B cell (primary cell): ENCODE measurements at regions of chr2 and their contacts with region 1.

Region 1: GRCh38 chr2:142989273-142990204 is 112.1 kb downstream of the KYNU start:
- DNase-seq: peak; percentile 50
- ATAC-seq: peak; percentile 39
- H3K4me3 ChIP-seq: no peak overlapping the region
- H3K4me3 Mint-ChIP-seq: no peak overlapping the region
- H3K27ac ChIP-seq: no peak overlapping the region
- H3K27ac Mint-ChIP-seq: no peak overlapping the region
- H3K4me1 ChIP-seq: no peaks in the 10 kb centered on the region
- H3K4me1 Mint-ChIP-seq: peaks cover 5% of the 10 kb centered on the region
- H3K27me3 ChIP-seq: no peaks in the 10 kb centered on the region
- H3K27me3 Mint-ChIP-seq: no peaks in the 10 kb centered on the region
- CTCF ChIP-seq: peak; percentile 74

Region 2: DNA sequence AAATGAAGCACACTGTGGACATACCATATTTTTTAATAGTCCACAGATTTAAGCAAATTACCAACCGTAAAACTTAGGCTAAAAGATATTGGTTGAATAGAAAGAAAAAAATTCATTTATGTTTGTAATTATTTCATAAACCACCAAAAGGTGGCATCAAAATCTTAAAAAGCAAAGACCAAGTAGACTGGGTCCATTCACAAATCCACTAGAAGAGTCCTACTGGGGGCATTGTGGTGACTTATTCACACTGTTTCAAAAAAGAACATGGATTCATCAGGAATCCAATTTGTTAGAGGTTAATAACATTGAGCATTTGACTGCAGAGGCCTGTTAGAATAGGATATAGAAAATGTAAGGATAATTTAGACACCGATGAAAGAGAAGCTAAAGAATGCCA is 307.0 kb before region 1 on chr2:
- CTCF ChIA-PET with region 1: interaction called, 29 read pairs
- POLR2A ChIA-PET with region 1: no interaction called
- intact Hi-C with region 1: loop called (anchors 1 kb)
- DNase-seq: peak; percentile 13
- ATAC-seq: no peak
- H3K4me3 ChIP-seq: no peak overlapping the region
- H3K4me3 Mint-ChIP-seq: no peak overlapping the region
- H3K27ac ChIP-seq: no peak overlapping the region
- H3K27ac Mint-ChIP-seq: no peak overlapping the region
- H3K4me1 ChIP-seq: no peaks in the 10 kb centered on the region
- H3K4me1 Mint-ChIP-seq: no peaks in the 10 kb centered on the region
- H3K27me3 ChIP-seq: no peaks in the 10 kb centered on the region
- H3K27me3 Mint-ChIP-seq: peaks cover 4% of the 10 kb centered on the region
- CTCF ChIP-seq: peak; percentile 37

Region 3: DNA sequence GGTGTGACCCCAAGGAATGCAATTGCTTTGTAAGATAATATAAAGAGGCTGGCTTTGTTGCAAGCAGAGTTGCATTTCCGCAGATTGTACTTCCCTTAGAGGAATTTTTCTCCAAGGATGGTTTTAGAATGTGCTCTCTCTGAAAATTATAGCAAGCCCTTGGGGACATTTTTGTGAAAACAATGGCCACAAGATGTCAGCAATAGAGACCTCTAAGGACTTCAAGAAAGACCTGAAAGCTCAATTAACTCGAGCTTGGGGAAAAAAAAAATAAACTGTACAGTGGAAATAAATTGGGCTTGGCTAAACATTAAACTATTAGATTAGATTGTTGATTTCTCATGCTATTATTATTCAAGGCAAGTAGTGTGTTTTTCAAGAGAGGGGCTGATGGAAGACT is 193.4 kb before region 1 on chr2:
- CTCF ChIA-PET with region 1: interaction called, 15 read pairs
- POLR2A ChIA-PET with region 1: no interaction called
- intact Hi-C with region 1: no loop called
- DNase-seq: peak; percentile 9
- ATAC-seq: no peak
- H3K4me3 ChIP-seq: no peak overlapping the region
- H3K4me3 Mint-ChIP-seq: no peak overlapping the region
- H3K27ac ChIP-seq: no peak overlapping the region
- H3K27ac Mint-ChIP-seq: no peak overlapping the region
- H3K4me1 ChIP-seq: no peaks in the 10 kb centered on the region
- H3K4me1 Mint-ChIP-seq: peaks cover 4% of the 10 kb centered on the region
- H3K27me3 ChIP-seq: no peaks in the 10 kb centered on the region
- H3K27me3 Mint-ChIP-seq: no peaks in the 10 kb centered on the region
- CTCF ChIP-seq: no peak

Region 4: GRCh38 chr2:142974288-142975024 is 15.1 kb before region 1 on chr2:
- CTCF ChIA-PET with region 1: interaction called, 43 read pairs
- POLR2A ChIA-PET with region 1: no interaction called
- intact Hi-C with region 1: no loop called
- DNase-seq: no peak
- ATAC-seq: no peak
- H3K4me3 ChIP-seq: no peak overlapping the region
- H3K4me3 Mint-ChIP-seq: no peak overlapping the region
- H3K27ac ChIP-seq: peak overlapping the region in 1 of 2 donors; percentile 40
- H3K27ac Mint-ChIP-seq: peak overlapping the region; percentile 60
- H3K4me1 ChIP-seq: peaks cover 0 to 3% of the 10 kb centered on the region in 2 donors
- H3K4me1 Mint-ChIP-seq: peaks cover 36% of the 10 kb centered on the region
- H3K27me3 ChIP-seq: no peaks in the 10 kb centered on the region
- H3K27me3 Mint-ChIP-seq: no peaks in the 10 kb centered on the region
- CTCF ChIP-seq: no peak